ENCODE measurements at regions of chr12 and their contacts with region 1.

Region 1: DNA sequence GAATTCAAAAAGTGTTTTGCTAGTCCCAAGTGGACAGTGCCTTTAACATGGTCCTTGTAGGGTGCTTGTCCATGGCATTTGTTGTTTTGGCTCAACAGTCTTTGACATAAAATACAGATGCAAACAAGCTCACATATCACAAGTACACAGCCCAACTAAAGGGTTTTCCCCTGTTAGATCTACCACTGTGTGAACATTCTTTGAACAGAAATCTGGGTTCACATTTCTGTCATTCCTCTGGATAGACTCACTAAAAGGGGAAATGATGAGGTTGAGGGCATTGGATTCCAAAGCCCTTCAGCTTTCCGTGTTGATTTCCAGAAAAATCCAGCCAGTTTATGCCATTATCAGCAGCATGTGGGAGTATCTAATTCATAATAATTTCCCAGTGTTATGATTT is 54.1 kb downstream of the EP400 start:
- DNase-seq: no peak
- ATAC-seq: no peak
- H3K4me3 ChIP-seq: no peak overlapping the region
- H3K27ac ChIP-seq: no peak overlapping the region
- H3K4me1 ChIP-seq: no peaks in the 10 kb centered on the region
- H3K27me3 ChIP-seq: no peaks in the 10 kb centered on the region; a peak in 1 of 5 replicates
- CTCF ChIP-seq: no peak
- EP300 ChIP-seq: no peak
- POLR2A ChIP-seq: no peak
- RAD21 ChIP-seq: no peak

Region 2: DNA sequence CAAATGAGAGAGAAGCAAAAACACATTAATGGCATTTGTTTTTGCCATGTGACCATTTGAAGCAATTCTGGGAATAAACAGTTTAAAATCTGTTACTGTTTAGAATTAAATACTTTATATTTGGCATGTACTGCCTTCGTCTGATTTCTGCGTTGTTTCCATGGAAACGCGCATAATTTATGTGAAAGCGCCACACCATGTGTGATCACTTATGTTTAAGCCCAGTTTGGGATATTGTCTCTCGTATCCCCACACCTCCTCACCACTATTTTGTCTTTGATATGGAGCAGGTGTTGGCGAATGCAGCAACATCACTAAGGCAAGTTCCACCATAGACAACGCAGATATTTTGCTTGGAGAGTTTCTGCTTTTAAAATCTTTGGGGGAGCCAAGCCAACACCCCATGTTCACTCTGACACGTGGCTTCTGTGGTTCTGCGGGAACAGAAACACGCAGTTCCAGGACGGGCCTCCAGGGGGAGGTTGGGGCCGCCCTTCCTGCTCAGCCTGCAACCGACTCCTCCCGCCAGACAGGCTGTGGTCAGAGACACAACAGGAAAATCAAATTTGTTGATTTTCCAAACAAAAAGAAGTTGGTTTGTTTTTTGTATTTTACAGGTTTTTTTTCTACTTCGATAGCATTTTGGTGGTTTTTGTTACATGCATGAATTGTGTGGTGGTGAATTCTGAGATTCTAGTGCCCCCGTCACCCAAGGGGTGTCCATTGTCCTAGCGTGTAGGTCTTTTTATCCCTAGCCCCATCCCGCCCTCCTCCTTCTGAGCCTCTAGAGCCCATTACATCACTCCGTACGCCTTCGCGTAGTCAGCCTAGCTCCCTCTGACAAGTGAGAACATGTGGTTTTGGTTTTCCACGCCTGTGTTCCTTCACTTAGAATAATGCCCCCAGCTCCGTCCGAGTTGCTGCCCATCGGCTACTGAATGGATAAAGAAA is 394.8 kb before region 1 on chr12:
- CTCF ChIA-PET with region 1: no interaction called
- POLR2A ChIA-PET with region 1: no interaction called
- in situ Hi-C with region 1: loop called (anchors 25 kb)
- intact Hi-C with region 1: no loop called
- DNase-seq: peak; percentile 21
- ATAC-seq: peak; percentile 89
- H3K4me3 ChIP-seq: no peak overlapping the region
- H3K27ac ChIP-seq: no peak overlapping the region
- H3K4me1 ChIP-seq: no peaks in the 10 kb centered on the region
- H3K27me3 ChIP-seq: peaks cover 14 to 88% of the 10 kb centered on the region in 2 experiments; a peak in 4 of 5 replicates
- CTCF ChIP-seq: peak; percentile 76
- EP300 ChIP-seq: no peak
- POLR2A ChIP-seq: no peak
- RAD21 ChIP-seq: no peak

Region 3: GRCh38 chr12:132030367-132031038 is 26.7 kb after region 1 on chr12:
- CTCF ChIA-PET with region 1: no interaction called
- POLR2A ChIA-PET with region 1: no interaction called
- in situ Hi-C with region 1: no loop called
- intact Hi-C with region 1: no loop called
- DNase-seq: no peak
- ATAC-seq: no peak
- H3K4me3 ChIP-seq: no peak overlapping the region
- H3K27ac ChIP-seq: no peak overlapping the region
- H3K4me1 ChIP-seq: no peaks in the 10 kb centered on the region
- H3K27me3 ChIP-seq: no peaks in the 10 kb centered on the region
- CTCF ChIP-seq: no peak
- EP300 ChIP-seq: no peak
- POLR2A ChIP-seq: no peak
- RAD21 ChIP-seq: no peak